ENCODE measurements at regions of chr16 and their contacts with region 1.

Region 1: DNA sequence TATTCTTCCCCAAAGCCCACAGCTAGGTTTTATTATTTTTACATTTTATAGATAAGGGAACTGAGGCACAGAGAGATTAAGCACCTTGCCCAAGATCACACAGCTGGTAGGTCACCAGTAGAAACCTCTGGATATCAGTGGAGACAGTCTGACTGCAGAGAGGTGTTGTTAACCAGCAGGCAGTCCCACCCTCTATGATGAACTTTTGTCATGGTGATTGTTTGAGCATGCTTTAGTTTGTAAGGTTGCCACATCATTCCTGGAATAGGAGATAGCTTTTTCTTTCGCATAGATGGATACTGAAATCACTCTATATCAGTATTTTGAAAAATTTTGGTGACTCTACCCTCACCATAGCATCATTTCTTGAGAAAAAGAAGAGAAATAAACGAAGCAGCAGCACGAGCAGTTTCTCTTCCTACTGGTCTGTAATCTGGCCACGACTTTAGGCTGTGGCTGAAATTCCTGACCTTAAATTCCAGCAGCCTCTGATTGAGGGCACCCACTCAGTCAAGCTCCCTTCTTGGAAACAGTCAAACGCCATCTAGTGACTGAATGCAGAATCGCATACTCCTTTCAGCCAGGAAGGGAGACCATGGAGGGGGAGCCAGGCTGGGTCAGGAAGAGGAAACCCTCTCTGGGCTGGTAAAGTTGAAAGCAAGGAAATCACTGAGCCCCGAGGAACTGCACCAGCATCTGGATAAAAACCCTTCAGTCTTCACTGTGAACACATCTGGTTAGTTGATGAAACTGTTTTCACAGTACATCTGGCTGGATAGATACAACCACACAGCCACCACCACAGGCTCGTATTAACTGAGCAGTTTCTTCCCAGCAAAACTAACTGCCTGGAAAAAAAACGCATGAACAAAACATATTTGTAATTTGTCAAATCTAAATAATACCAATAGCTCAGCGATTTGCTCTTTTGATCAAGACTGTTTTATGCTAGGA is 108.4 kb upstream of the XYLT1 start:
- DNase-seq: peak; percentile 71
- ATAC-seq: peak; percentile 86
- H3K4me3 Mint-ChIP-seq: no peak overlapping the region
- H3K27ac Mint-ChIP-seq: no peak overlapping the region
- H3K4me1 Mint-ChIP-seq: no peaks in the 10 kb centered on the region
- H3K27me3 Mint-ChIP-seq: peaks cover 12% of the 10 kb centered on the region

Region 2: GRCh38 chr16:16861546-16861945 is 717.7 kb before region 1 on chr16:
- CTCF ChIA-PET with region 1: interaction called, 5 read pairs
- POLR2A ChIA-PET with region 1: no interaction called
- intact Hi-C with region 1: loop called in 1 of 2 experiments (anchors 5 kb)
- DNase-seq: peak; percentile 70
- ATAC-seq: no peak
- H3K4me3 Mint-ChIP-seq: no peak overlapping the region
- H3K27ac Mint-ChIP-seq: no peak overlapping the region
- H3K4me1 Mint-ChIP-seq: no peaks in the 10 kb centered on the region
- H3K27me3 Mint-ChIP-seq: peaks cover 6% of the 10 kb centered on the region

Region 3: GRCh38 chr16:17194190-17194780 is 384.9 kb before region 1 on chr16:
- CTCF ChIA-PET with region 1: interaction called, 3 read pairs
- POLR2A ChIA-PET with region 1: no interaction called
- intact Hi-C with region 1: loop called (anchors 5 kb)
- DNase-seq: peak; percentile 77
- ATAC-seq: peak; percentile 47
- H3K4me3 Mint-ChIP-seq: no peak overlapping the region
- H3K27ac Mint-ChIP-seq: no peak overlapping the region
- H3K4me1 Mint-ChIP-seq: no peaks in the 10 kb centered on the region
- H3K27me3 Mint-ChIP-seq: no peaks in the 10 kb centered on the region

Region 4: GRCh38 chr16:17211797-17212196 is 367.4 kb before region 1 on chr16:
- CTCF ChIA-PET with region 1: no interaction called
- POLR2A ChIA-PET with region 1: no interaction called
- intact Hi-C with region 1: loop called in 1 of 2 experiments (anchors 5 kb)
- DNase-seq: peak; percentile 63
- ATAC-seq: peak; percentile 75
- H3K4me3 Mint-ChIP-seq: no peak overlapping the region
- H3K27ac Mint-ChIP-seq: no peak overlapping the region
- H3K4me1 Mint-ChIP-seq: peaks cover 17% of the 10 kb centered on the region
- H3K27me3 Mint-ChIP-seq: no peaks in the 10 kb centered on the region

Region 5: GRCh38 chr16:17476414-17477270 is 102.6 kb before region 1 on chr16:
- CTCF ChIA-PET with region 1: interaction called, 4 read pairs
- POLR2A ChIA-PET with region 1: no interaction called
- intact Hi-C with region 1: loop called (anchors 5 kb)
- DNase-seq: peak; percentile 59
- ATAC-seq: peak; percentile 53
- H3K4me3 Mint-ChIP-seq: no peak overlapping the region
- H3K27ac Mint-ChIP-seq: no peak overlapping the region
- H3K4me1 Mint-ChIP-seq: peaks cover 24% of the 10 kb centered on the region
- H3K27me3 Mint-ChIP-seq: peaks cover 5% of the 10 kb centered on the region

Region 6: DNA sequence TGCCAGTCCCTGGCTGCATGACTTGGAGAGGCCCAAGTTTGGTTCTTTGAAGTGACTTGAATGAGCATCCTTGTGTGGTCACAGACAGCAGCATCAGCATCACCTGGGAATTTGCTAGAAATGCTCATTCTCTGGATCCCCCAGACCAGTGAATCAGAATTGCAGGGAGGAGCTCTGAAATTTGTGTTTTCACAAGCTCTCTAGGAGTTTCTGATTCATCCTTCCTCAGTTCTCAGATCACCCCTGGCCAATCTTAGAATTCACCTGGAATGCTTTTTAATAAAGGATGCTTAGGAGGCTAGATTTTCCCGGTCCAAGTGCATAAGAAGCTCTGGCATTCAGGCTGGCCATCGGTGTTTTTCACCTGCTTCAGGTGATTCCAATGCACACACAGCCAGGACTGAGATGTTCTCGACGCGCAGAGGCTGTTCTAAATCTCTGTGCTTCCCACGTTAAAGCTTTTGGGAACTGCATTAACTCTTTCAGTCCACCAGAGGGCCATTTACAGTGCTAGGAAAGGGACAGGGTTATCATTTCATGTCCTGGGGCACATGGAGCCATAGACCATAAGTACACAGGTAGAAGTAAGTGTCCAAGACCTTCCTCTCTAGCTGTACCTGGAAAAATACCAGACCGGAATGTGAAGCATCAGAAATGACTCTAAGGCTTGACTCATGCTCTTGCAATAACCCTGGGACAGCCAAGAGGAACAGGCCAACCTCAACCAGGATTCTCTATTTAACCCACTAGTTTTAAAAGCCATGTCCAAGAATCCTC is 22.7 kb before region 1 on chr16:
- CTCF ChIA-PET with region 1: interaction called, 33 read pairs
- POLR2A ChIA-PET with region 1: no interaction called
- intact Hi-C with region 1: no loop called
- DNase-seq: peak; percentile 9
- ATAC-seq: peak; percentile 51
- H3K4me3 Mint-ChIP-seq: no peak overlapping the region
- H3K27ac Mint-ChIP-seq: no peak overlapping the region
- H3K4me1 Mint-ChIP-seq: peaks cover 6% of the 10 kb centered on the region
- H3K27me3 Mint-ChIP-seq: peaks cover 8% of the 10 kb centered on the region

Region 7: GRCh38 chr16:17589898-17590297 is 10.7 kb after region 1 on chr16:
- CTCF ChIA-PET with region 1: interaction called, 19 read pairs
- POLR2A ChIA-PET with region 1: interaction called, 4 read pairs
- intact Hi-C with region 1: no loop called
- DNase-seq: no peak
- ATAC-seq: no peak
- H3K4me3 Mint-ChIP-seq: no peak overlapping the region
- H3K27ac Mint-ChIP-seq: peak overlapping the region; percentile 58
- H3K4me1 Mint-ChIP-seq: peaks cover 12% of the 10 kb centered on the region
- H3K27me3 Mint-ChIP-seq: peaks cover 15% of the 10 kb centered on the region

Region 8: DNA sequence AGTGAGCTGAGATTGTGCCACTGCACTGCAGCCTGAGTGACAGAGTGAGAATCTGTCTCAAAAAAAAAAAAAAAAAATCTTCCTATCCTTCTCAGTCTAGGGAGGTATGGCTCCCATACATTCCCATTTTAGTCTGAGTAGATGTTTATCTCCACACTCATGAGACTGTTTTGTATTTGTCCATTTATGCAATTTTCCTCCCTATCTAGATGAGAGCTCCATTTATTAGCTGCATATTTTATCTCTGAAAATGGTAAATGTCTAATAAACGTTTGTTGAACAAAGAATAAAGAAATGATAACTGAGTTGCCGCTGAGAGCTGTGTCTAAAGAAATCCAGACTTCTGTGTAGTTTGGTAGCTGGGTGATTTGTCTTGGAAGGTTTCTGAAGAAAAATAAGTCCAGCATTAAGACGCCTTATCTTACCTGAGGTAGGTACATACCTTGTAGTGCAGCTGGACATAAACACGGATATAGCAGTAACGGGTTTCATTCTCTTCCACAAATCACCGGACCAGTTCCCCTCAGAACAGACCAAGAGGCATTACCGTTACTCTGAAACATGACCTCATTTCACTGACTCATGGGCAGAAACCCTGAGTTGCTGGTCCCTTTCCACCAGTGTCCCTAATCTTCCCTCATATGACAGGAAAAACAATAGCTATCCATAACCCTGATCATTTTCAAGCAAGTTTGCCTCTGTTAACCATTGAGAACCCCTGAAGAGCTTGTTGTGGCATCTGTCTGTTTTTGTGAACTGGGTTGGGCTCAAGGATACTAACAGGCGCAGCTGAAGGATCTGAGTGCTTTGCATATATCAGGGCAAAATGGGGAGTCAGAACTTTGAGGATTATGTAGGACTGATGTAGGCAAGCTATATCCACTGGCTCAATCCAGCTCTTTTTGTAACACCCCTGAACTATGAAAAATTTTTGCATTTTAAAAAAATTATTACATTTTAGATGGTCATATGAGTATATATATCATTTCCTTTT is 69.0 kb after region 1 on chr16:
- CTCF ChIA-PET with region 1: no interaction called
- POLR2A ChIA-PET with region 1: no interaction called
- intact Hi-C with region 1: no loop called
- DNase-seq: no peak
- ATAC-seq: no peak
- H3K4me3 Mint-ChIP-seq: no peak overlapping the region
- H3K27ac Mint-ChIP-seq: no peak overlapping the region
- H3K4me1 Mint-ChIP-seq: no peaks in the 10 kb centered on the region
- H3K27me3 Mint-ChIP-seq: peaks cover 8% of the 10 kb centered on the region

Region 9: DNA sequence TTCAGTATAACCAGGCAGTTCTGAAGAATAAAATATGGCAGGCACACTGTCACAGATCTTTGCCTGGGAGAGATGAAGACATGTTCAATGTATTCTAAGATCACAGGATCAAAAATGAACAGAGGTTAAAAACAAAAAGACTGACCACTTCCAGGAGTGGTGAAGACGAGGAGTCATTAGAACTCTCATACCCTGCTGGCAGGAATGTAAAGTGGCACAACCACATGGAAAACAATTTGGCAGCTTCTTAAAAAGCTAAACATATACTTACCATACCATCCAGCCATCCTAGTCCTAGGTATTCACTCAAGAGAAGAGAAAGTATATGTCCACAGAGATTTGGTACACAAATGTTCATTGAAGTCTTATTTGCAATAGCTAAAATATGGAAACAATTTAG is 351.1 kb after region 1 on chr16:
- CTCF ChIA-PET with region 1: no interaction called
- POLR2A ChIA-PET with region 1: no interaction called
- intact Hi-C with region 1: no loop called
- DNase-seq: no peak
- ATAC-seq: no peak
- H3K4me3 Mint-ChIP-seq: no peak overlapping the region
- H3K27ac Mint-ChIP-seq: no peak overlapping the region
- H3K4me1 Mint-ChIP-seq: no peaks in the 10 kb centered on the region
- H3K27me3 Mint-ChIP-seq: peaks cover 2% of the 10 kb centered on the region

Measured in activated CD4-positive, alpha-beta T cell treated with anti-CD3 and anti-CD28 coated beads for 36 hours (primary cell).